IMR-90 (cell line): ENCODE measurements at regions of chr3 and their contacts with region 1.

Region 1: GRCh38 chr3:51941798-51942602 is at the starts of genes PARP3 and RRP9:
- DNase-seq: peak; percentile 100
- ATAC-seq: peak; percentile 93
- H3K4me3 ChIP-seq: peak within 1 kb of the TSS; percentile 49
- H3K27ac ChIP-seq: peak within 1 kb of the TSS; percentile 79
- H3K4me1 ChIP-seq: peaks cover 13% of the 10 kb centered on the region
- H3K27me3 ChIP-seq: no peaks in the 10 kb centered on the region
- CTCF ChIP-seq: peak; percentile 99
- POLR2A ChIP-seq: peak; percentile 51
- RAD21 ChIP-seq: peak; percentile 97
- total RNA-seq, gene PARP3: 14.4 and 16.3 TPM in 2 replicates
- total RNA-seq, gene RRP9: 38.6 and 39.8 TPM in 2 replicates

Region 2: DNA sequence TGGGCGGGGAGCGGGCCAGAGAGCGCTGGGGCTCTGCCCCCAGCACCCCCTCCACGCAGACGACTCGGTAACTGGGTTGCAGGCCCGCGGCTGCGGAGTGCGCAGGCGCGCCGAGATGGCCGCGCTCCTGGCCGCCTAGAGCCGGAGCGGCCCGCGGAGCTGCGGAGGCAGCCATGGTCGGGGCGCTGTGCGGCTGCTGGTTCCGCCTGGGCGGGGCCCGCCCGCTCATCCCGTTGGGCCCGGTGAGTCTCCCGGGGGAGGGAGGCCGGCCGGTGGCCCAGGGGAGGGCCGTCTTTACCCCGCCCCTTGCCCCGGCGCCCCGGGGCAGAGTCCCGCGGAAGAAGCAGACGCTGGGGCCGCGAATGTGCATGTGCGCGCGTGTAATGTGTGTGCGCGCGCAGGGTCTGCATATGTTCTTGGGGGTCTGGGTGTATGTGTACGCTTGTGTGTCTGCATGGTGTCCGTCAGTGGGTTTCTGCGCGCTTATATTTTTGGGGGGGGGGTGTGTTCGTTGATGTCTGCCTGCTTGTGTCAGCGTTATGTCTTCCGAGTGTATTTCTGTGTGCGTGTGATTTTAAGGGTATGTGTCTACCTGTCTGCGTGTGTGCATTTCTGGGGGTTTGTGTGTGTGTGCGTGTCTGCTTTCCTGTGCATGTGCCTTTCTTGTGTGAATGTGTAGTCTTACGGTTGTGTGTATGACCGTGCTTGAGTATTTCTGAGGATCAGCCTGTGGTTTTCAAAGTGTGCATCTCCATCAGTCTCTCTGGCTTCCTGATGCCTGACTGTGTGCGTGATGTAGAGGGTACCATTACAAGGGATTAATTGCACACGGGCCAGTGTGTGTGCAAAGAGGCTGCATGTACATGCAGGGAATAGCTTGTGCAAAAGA is 33.2 kb after region 1 on chr3 and contains the start of gene ABHD14A:
- CTCF ChIA-PET with region 1: interaction called, 10 read pairs
- POLR2A ChIA-PET with region 1: no interaction called
- dilution Hi-C with region 1: no loop called
- in situ Hi-C with region 1: no loop called
- intact Hi-C with region 1: loop called (anchors 1 kb)
- DNase-seq: peak; percentile 55
- ATAC-seq: peak; percentile 79
- H3K4me3 ChIP-seq: peak within 1 kb of the TSS; percentile 68
- H3K27ac ChIP-seq: peak within 1 kb of the TSS; percentile 43
- H3K4me1 ChIP-seq: peaks cover 13% of the 10 kb centered on the region
- H3K27me3 ChIP-seq: no peaks in the 10 kb centered on the region
- CTCF ChIP-seq: no peak
- POLR2A ChIP-seq: no peak
- RAD21 ChIP-seq: no peak
- total RNA-seq, gene ABHD14A: 3.1 and 3.4 TPM in 2 replicates

Region 3: DNA sequence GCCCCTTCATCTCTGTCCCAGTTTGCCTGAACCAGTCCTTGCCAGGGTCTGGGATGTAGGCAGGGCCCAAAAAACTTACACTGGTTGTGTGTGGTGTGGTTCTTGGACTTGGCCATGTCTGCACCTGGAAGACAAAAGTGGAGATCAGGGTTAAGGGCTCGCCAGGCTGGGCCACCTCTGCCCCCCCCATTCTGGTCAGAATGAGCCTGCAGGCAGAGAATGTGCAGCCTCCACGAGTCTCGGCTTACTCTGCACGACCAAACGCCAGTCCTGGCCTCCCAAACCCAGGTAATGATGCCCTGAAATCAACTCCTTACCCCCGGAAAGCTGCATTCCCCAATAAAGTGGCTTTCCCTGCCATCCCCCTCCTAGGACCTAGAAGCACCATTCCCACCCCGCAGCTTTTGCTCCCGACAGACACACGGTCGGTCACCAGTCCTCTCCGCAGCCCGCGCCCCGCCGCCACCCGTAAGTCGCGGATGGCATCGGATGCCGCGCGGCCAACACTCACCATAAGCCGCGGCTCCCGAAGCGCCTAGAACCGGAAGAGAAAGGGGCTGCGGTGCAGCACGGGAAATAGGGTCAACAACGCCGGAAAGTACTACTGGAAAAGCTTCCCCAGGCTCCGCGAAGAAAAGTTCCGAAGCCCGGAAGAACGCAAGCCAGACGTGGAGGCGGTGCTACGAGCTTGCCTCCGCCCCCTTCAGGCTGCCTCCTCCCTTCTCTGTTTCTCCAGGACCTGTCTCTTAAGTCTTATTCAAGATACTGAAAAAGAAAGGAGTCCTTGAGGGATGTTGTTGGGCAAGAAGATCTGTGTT is 53.6 kb after region 1 on chr3 and contains the start of gene RPL29:
- CTCF ChIA-PET with region 1: no interaction called
- POLR2A ChIA-PET with region 1: interaction called, 4 read pairs
- dilution Hi-C with region 1: no loop called
- in situ Hi-C with region 1: no loop called
- intact Hi-C with region 1: loop called (anchors 2 kb)
- DNase-seq: peak; percentile 94
- ATAC-seq: peak; percentile 96
- H3K4me3 ChIP-seq: peak within 1 kb of the TSS; percentile 77
- H3K27ac ChIP-seq: peak within 1 kb of the TSS; percentile 78
- H3K4me1 ChIP-seq: peaks cover 5% of the 10 kb centered on the region
- H3K27me3 ChIP-seq: no peaks in the 10 kb centered on the region
- CTCF ChIP-seq: no peak
- POLR2A ChIP-seq: peak; percentile 94
- RAD21 ChIP-seq: 0 out of 2 replicates have a peak, but pooled peaks have one; percentile 12
- total RNA-seq, gene RPL29: 1,798 and 2,081 TPM in 2 replicates

Region 4: DNA sequence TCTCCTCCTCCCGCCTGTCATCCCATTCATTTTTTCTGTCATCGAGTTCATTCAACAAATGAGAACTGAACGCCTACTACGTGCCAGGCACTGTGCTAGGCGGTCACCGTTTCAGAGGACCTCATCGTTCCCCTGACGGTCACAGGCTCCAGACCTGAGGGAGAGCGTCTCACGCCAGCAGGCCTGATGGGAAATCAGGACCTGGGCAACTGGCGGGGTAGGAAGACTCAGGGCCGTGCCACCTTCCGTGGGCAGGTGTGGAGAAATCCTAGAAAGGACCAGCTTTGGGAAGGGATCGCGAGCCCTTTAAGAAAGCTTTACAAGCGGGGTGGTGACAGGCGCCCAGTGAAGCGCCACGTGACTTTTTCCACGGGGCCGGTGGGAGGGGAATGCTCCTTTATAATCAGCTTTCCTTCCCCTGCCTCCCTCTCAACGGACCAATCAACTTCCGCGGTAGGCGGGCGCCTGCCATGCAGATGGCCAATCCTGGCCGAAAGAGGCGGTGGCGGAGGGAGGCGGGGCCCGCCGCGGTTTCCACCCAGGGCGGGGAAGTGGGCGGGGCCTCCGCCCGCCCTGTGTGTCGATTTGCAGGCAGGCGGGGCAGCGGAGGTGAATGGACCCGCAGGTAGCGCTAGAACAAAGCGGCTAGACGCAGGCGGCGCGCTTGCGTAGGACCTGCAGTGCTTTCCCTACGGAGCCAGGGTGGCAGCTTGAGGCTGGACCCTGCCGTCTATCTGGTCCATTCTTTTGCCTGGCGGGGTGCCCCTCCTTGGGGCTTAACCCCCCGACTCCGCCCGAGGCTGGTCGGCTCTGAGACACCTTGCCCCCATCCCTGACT is 115.2 kb after region 1 on chr3:
- CTCF ChIA-PET with region 1: no interaction called
- POLR2A ChIA-PET with region 1: no interaction called
- dilution Hi-C with region 1: no loop called
- in situ Hi-C with region 1: no loop called
- intact Hi-C with region 1: loop called (anchors 1 kb)
- DNase-seq: peak; percentile 97
- ATAC-seq: peak; percentile 87
- H3K4me3 ChIP-seq: peak overlapping the region; percentile 51
- H3K27ac ChIP-seq: peak overlapping the region; percentile 83
- H3K4me1 ChIP-seq: peaks cover 19% of the 10 kb centered on the region
- H3K27me3 ChIP-seq: no peaks in the 10 kb centered on the region
- CTCF ChIP-seq: no peak
- POLR2A ChIP-seq: peak; percentile 35; the same call in 1 of the 2 replicates
- RAD21 ChIP-seq: no peak

Region 5: GRCh38 chr3:52144034-52144795 is 202.2 kb after region 1 on chr3:
- CTCF ChIA-PET with region 1: no interaction called
- POLR2A ChIA-PET with region 1: no interaction called
- dilution Hi-C with region 1: no loop called
- in situ Hi-C with region 1: no loop called
- intact Hi-C with region 1: loop called (anchors 5 kb)
- DNase-seq: peak; percentile 77
- ATAC-seq: peak; percentile 99
- H3K4me3 ChIP-seq: no peak overlapping the region
- H3K27ac ChIP-seq: no peak overlapping the region
- H3K4me1 ChIP-seq: peaks cover 5% of the 10 kb centered on the region
- H3K27me3 ChIP-seq: no peaks in the 10 kb centered on the region
- CTCF ChIP-seq: peak; percentile 93
- POLR2A ChIP-seq: no peak
- RAD21 ChIP-seq: peak; percentile 93